Posterior vena cava (tissue), 2 donors: ENCODE measurements at regions of chr18 and their contacts with region 1.

Region 1: DNA sequence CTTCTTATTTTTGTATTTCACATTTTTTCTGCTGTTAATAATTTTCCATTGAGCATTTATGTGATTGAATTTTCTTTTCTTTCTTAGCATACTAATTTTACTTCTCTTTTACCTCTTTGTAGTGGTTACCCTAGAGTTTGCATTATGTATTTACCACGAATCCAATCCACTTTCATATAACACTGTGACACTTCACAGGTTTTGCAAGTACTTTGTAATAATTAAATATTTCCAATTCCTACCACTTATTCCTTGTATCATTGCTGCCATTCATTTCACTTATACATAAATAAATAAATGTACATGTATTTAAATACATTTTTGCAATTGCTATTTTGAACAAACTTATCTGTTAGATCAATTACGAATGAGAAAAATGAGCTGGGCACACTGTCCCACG is 110.8 kb downstream of the TGIF1 start:
- DNase-seq: no peak

Region 2: DNA sequence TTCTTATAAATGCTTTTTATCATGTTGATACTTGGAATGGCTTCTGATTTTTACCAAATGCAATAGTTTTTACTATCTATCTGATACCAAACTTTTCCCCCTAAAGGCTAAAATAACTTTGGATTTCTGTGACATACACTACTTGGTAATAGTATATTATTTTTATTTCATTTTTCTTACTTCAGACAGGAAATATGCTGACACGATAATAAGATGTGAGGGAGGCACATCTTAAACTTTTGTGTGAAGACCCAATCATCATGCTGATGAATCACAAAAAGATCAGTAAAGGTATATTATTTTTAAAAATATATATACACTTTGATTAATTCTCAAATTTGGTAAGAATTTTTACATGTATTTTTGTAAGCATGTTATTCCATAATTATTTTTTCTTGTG is 12.0 kb after region 1 on chr18:
- intact Hi-C with region 1: loop called in 1 of 2 experiments (anchors 1 kb)
- DNase-seq: no peak